ENCODE measurements at regions of chr4 and their contacts with region 1.

Region 1: GRCh38 chr4:128454281-128455075 is 166.9 kb upstream of the PGRMC2 start:
- DNase-seq: peak; percentile 97
- H3K4me3 ChIP-seq: peak overlapping the region; percentile 49
- H3K27ac ChIP-seq: peak overlapping the region; percentile 74
- H3K4me1 ChIP-seq: peaks cover 45% of the 10 kb centered on the region
- H3K27me3 ChIP-seq: no peaks in the 10 kb centered on the region

Region 2: GRCh38 chr4:128622077-128622476 is 167.6 kb after region 1 on chr4:
- in situ Hi-C with region 1: no loop called
- DNase-seq: no peak
- H3K4me3 ChIP-seq: no peak overlapping the region
- H3K27ac ChIP-seq: no peak overlapping the region
- H3K4me1 ChIP-seq: no peaks in the 10 kb centered on the region
- H3K27me3 ChIP-seq: no peaks in the 10 kb centered on the region

Region 3: GRCh38 chr4:128809477-128810330 is 355.2 kb after region 1 on chr4 and contains the start of gene JADE1:
- in situ Hi-C with region 1: loop called (anchors 10 kb)
- DNase-seq: peak; percentile 97
- H3K4me3 ChIP-seq: peak within 1 kb of the TSS; percentile 84
- H3K27ac ChIP-seq: peak within 1 kb of the TSS; percentile 89
- H3K4me1 ChIP-seq: peaks cover 7% of the 10 kb centered on the region; the same call in 1 of the 2 replicates
- H3K27me3 ChIP-seq: no peaks in the 10 kb centered on the region
- total RNA-seq, gene JADE1: 35.9 and 37.6 TPM in 2 replicates

Region 4: GRCh38 chr4:128863312-128864075 is 409.0 kb after region 1 on chr4:
- in situ Hi-C with region 1: loop called (anchors 10 kb)
- DNase-seq: peak; percentile 79
- H3K4me3 ChIP-seq: no peak overlapping the region
- H3K27ac ChIP-seq: no peak overlapping the region
- H3K4me1 ChIP-seq: peaks cover 21% of the 10 kb centered on the region
- H3K27me3 ChIP-seq: no peaks in the 10 kb centered on the region